ENCODE measurements at regions of chr1 and their contacts with region 1.

Region 1: DNA sequence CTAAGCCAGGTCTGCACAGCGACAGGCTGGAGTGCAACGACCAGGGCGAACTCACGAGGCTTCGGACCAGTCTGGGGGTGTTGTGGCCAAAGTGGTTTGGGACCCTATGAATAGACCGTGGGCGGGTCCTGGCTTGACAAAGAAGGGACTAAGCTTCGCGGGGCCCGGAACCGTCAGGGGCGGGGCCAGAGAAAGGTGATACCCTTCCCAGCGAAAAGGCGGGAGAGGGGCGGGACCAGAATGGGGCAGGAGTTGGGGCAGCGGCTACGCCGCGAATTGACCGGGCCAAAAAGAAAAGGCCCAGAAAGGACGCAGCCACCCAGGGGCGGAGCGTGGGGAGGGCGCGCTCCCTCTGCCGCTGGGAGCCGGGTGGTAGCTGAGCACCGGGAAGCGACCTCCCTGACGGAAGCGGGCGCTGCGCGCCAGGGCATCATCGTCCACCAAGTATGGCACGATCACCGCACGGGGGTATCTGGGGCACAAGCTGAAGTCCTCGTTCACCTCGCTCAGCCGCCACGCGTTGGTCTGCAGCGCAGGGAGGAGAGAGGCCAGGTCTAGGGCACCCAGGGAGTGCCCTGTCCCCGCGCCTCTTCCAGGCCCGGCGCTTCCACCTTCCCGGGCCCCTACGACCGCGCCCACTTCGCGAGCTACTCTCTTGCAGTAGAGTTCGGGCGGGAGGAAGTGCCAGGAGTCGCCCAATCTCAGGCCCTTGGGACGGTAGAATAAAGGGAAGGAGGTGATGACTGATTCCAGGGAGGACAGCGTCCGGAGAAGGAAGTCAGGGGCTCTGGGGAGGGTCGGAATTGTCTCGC is 6.7 kb upstream of the FAM167B start:
- DNase-seq: peak in 13 of 14 experiments; percentile 38 to 86 (median 63)
- ATAC-seq: peak; percentile 75
- H3K4me3 ChIP-seq: peak overlapping the region; percentile 90
- H3K4me3 Mint-ChIP-seq: peak overlapping the region; percentile 94
- H3K27ac ChIP-seq: peak overlapping the region; percentile 15 to 50
- H3K27ac Mint-ChIP-seq: peak overlapping the region; percentile 64
- H3K4me1 ChIP-seq: peaks cover 33% of the 10 kb centered on the region
- H3K4me1 Mint-ChIP-seq: peaks cover 25% of the 10 kb centered on the region
- H3K27me3 ChIP-seq: no peaks in the 10 kb centered on the region
- H3K27me3 Mint-ChIP-seq: no peaks in the 10 kb centered on the region
- CTCF ChIP-seq: peak; percentile 52

Region 2: GRCh38 chr1:32215629-32216480 is 24.5 kb before region 1 on chr1:
- CTCF ChIA-PET with region 1: interaction called, 17 read pairs
- POLR2A ChIA-PET with region 1: interaction called, 7 read pairs
- intact Hi-C with region 1: no loop called
- DNase-seq: peak; percentile 33 to 81 (median 50)
- ATAC-seq: peak; percentile 96
- H3K4me3 ChIP-seq: no peak overlapping the region
- H3K4me3 Mint-ChIP-seq: no peak overlapping the region
- H3K27ac ChIP-seq: no peak overlapping the region
- H3K27ac Mint-ChIP-seq: peak overlapping the region; percentile 62
- H3K4me1 ChIP-seq: peaks cover 16% of the 10 kb centered on the region
- H3K4me1 Mint-ChIP-seq: peaks cover 13% of the 10 kb centered on the region
- H3K27me3 ChIP-seq: no peaks in the 10 kb centered on the region
- H3K27me3 Mint-ChIP-seq: no peaks in the 10 kb centered on the region
- CTCF ChIP-seq: peak; percentile 85

Region 3: GRCh38 chr1:32273388-32274208 is 33.3 kb after region 1 on chr1:
- CTCF ChIA-PET with region 1: interaction called, 9 read pairs
- POLR2A ChIA-PET with region 1: interaction called, 543 read pairs
- intact Hi-C with region 1: loop called in 1 of 2 experiments (anchors 2 kb)
- DNase-seq: peak; percentile 51 to 92 (median 84)
- ATAC-seq: peak; percentile 89
- H3K4me3 ChIP-seq: peak overlapping the region; percentile 44
- H3K4me3 Mint-ChIP-seq: peak overlapping the region; percentile 87
- H3K27ac ChIP-seq: peak overlapping the region; percentile 60 to 78
- H3K27ac Mint-ChIP-seq: peak overlapping the region; percentile 93
- H3K4me1 ChIP-seq: peaks cover 76% of the 10 kb centered on the region
- H3K4me1 Mint-ChIP-seq: peaks cover 56% of the 10 kb centered on the region
- H3K27me3 ChIP-seq: no peaks in the 10 kb centered on the region
- H3K27me3 Mint-ChIP-seq: no peaks in the 10 kb centered on the region
- CTCF ChIP-seq: no peak

Region 4: DNA sequence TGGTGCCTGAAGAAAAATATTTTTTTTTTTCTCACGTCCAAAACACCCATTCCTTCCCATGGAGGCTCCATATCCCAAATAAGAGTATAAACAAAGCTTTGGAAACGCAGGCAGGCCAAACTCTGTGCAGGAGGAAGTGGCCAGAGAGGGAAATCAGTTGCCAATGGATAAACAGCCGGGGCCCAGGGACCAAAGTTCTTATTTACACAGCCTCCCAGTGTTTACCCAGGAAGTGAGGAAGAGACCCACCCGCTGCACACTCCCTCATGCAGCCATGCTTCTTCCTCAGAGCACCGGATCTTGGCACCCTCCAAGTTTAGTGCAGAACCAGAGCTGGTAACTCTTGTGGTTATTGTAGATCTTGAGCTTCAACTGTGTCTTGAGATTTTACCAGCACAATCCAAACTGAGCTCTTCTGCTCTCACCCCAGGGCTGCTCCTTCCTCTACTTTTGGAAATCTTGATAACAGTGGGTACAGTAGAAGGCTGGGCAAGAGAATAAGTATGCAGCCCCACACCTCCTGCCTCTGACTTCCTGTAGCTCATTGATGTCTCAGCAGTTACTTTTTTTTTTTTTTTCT is 81.5 kb after region 1 on chr1:
- CTCF ChIA-PET with region 1: interaction called, 10 read pairs
- POLR2A ChIA-PET with region 1: interaction called, 21 read pairs
- intact Hi-C with region 1: no loop called
- DNase-seq: peak in 10 of 14 experiments; percentile 7 to 70 (median 29)
- ATAC-seq: peak; percentile 87
- H3K4me3 ChIP-seq: peak overlapping the region; percentile 25
- H3K4me3 Mint-ChIP-seq: peak overlapping the region; percentile 62
- H3K27ac ChIP-seq: peak overlapping the region; percentile 12 to 49
- H3K27ac Mint-ChIP-seq: peak overlapping the region; percentile 82
- H3K4me1 ChIP-seq: peaks cover 62% of the 10 kb centered on the region
- H3K4me1 Mint-ChIP-seq: peaks cover 51% of the 10 kb centered on the region
- H3K27me3 ChIP-seq: no peaks in the 10 kb centered on the region
- H3K27me3 Mint-ChIP-seq: no peaks in the 10 kb centered on the region
- CTCF ChIP-seq: no peak

Region 5: GRCh38 chr1:32413507-32414185 is 173.3 kb after region 1 on chr1:
- CTCF ChIA-PET with region 1: no interaction called
- POLR2A ChIA-PET with region 1: no interaction called
- intact Hi-C with region 1: loop called in 1 of 2 experiments (anchors 5 kb)
- DNase-seq: peak; percentile 48 to 91 (median 66)
- ATAC-seq: peak; percentile 83
- H3K4me3 ChIP-seq: no peak overlapping the region
- H3K4me3 Mint-ChIP-seq: no peak overlapping the region
- H3K27ac ChIP-seq: no peak overlapping the region
- H3K27ac Mint-ChIP-seq: no peak overlapping the region
- H3K4me1 ChIP-seq: peaks cover 2% of the 10 kb centered on the region
- H3K4me1 Mint-ChIP-seq: no peaks in the 10 kb centered on the region
- H3K27me3 ChIP-seq: no peaks in the 10 kb centered on the region
- H3K27me3 Mint-ChIP-seq: peaks cover 20% of the 10 kb centered on the region
- CTCF ChIP-seq: peak; percentile 84